K562 (cell line): ENCODE measurements at regions of chr1 and their contacts with region 1.

Region 1: DNA sequence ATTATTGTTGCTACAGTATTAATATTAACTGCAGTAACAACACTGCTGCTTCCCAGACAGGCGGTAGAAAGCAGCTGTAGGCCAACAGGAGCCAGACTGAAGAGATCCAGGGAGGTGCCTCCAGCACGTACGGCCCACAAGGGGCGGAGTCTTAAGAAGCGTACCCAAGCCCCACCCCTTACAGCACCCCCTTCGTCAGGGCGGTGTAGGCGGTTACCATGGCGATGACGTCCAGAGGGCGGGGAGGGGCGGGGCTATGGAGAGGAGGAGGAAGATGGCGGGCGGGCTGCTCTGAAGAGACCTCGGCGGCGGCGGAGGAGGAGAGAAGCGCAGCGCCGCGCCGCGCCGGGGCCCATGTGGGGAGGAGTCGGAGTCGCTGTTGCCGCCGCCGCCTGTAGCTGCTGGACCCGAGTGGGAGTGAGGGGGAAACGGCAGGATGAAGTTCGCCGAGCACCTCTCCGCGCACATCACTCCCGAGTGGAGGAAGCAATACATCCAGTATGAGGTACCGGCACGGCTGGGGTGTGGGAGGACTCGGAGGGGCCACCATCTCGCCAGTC is at the start of gene XPR1:
- DNase-seq: peak; percentile 99 to 100 (median 99)
- ATAC-seq: peak; percentile 97
- H3K4me3 ChIP-seq: peak within 1 kb of the TSS; percentile 89
- H3K27ac ChIP-seq: peak within 1 kb of the TSS; percentile 78
- H3K4me1 ChIP-seq: peaks cover 5 to 16% of the 10 kb centered on the region in 2 experiments; a peak in 4 of 5 replicates
- H3K27me3 ChIP-seq: no peaks in the 10 kb centered on the region
- CTCF ChIP-seq: peak; percentile 30 to 49 (median 47); a peak in 5 of 6 replicates
- EP300 ChIP-seq: no peak
- POLR2A ChIP-seq: peak; percentile 92
- RAD21 ChIP-seq: peak; percentile 23 to 40; a peak in 2 of 4 replicates
- polyA plus RNA-seq, gene XPR1: 3.0 to 4.7 TPM

Region 2: GRCh38 chr1:180515864-180516388 is 115.9 kb before region 1 on chr1:
- CTCF ChIA-PET with region 1: no interaction called
- POLR2A ChIA-PET with region 1: no interaction called
- in situ Hi-C with region 1: no loop called
- intact Hi-C with region 1: loop called (anchors 5 kb)
- DNase-seq: peak; percentile 82 to 95 (median 86)
- ATAC-seq: peak; percentile 98
- H3K4me3 ChIP-seq: no peak overlapping the region
- H3K27ac ChIP-seq: peak overlapping the region; percentile 10; the same call in 1 of the 3 replicates
- H3K4me1 ChIP-seq: peaks cover 3 to 9% of the 10 kb centered on the region in 2 experiments; a peak in 3 of 5 replicates
- H3K27me3 ChIP-seq: no peaks in the 10 kb centered on the region
- CTCF ChIP-seq: peak; percentile 93 to 97 (median 94)
- EP300 ChIP-seq: peak; percentile 32; the same call in 1 of the 2 replicates
- POLR2A ChIP-seq: no peak
- RAD21 ChIP-seq: peak; percentile 98 to 99

Region 3: DNA sequence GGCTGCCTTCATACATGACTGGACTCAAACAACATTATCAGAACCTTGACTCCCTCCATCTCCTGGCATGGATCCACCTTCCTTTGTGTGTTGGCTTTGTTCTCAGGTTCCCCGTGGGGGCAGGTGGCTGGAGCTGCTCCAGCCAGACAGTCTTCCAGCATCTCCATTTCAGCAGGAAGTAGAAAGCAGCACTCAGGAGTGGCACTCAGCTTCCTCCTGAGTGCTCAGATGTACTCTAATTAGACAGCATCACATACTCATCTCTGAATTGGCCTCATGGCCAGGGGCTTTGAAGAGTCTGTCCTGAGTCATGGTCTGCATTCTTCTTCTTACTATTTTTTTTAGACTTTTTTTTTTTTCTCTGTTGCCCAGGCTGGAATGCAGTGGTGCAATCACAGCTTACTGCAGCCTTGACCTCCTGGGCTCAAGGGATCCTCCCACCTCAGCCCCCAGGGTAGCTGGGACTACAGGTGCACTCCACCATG is 45.1 kb before region 1 on chr1:
- CTCF ChIA-PET with region 1: no interaction called
- POLR2A ChIA-PET with region 1: interaction called, 5 read pairs
- in situ Hi-C with region 1: no loop called
- intact Hi-C with region 1: loop called (anchors 1 kb)
- DNase-seq: peak in 2 of 4 experiments; percentile 33 to 73
- ATAC-seq: peak; percentile 6
- H3K4me3 ChIP-seq: no peak overlapping the region
- H3K27ac ChIP-seq: peak overlapping the region; percentile 93
- H3K4me1 ChIP-seq: peaks cover 21 to 29% of the 10 kb centered on the region in 2 experiments
- H3K27me3 ChIP-seq: no peaks in the 10 kb centered on the region
- CTCF ChIP-seq: no peak
- EP300 ChIP-seq: no peak
- POLR2A ChIP-seq: no peak
- RAD21 ChIP-seq: no peak

Region 4: DNA sequence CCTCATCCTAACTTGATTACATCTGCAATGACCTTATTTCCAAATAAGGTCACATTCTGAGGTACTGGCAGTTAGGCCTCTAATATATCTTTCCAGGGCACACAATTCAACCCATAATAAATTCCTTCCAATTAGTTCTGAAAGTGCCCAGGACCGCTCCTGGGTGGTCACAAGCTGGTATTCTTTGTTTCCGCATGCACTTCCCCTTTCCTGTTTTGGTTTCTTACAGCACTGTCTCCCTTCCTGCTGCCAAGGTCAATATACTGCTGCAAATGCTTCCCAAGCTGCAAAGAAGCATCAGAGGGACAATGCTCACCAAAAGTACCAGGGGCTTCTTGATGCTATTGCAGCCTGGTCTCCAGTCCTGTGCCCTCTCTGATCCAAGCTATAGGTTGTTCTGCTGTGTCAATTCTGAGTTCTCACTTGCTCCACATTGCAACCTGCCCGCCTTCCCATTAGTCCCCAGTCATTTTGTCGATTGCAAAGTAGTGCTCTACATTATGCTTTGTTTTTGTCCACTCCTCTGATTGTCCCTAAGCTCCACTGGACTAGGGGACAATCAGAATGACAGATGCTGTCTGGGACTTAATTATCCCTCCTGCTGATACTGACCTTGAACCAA is 14.0 kb before region 1 on chr1:
- CTCF ChIA-PET with region 1: no interaction called
- POLR2A ChIA-PET with region 1: interaction called, 16 read pairs
- in situ Hi-C with region 1: no loop called
- intact Hi-C with region 1: no loop called
- DNase-seq: no peak
- ATAC-seq: no peak
- H3K4me3 ChIP-seq: no peak overlapping the region
- H3K27ac ChIP-seq: no peak overlapping the region
- H3K4me1 ChIP-seq: peaks cover 0 to 43% of the 10 kb centered on the region in 2 experiments; a peak in 4 of 5 replicates
- H3K27me3 ChIP-seq: no peaks in the 10 kb centered on the region
- CTCF ChIP-seq: no peak
- EP300 ChIP-seq: no peak
- POLR2A ChIP-seq: no peak
- RAD21 ChIP-seq: no peak

Region 5: DNA sequence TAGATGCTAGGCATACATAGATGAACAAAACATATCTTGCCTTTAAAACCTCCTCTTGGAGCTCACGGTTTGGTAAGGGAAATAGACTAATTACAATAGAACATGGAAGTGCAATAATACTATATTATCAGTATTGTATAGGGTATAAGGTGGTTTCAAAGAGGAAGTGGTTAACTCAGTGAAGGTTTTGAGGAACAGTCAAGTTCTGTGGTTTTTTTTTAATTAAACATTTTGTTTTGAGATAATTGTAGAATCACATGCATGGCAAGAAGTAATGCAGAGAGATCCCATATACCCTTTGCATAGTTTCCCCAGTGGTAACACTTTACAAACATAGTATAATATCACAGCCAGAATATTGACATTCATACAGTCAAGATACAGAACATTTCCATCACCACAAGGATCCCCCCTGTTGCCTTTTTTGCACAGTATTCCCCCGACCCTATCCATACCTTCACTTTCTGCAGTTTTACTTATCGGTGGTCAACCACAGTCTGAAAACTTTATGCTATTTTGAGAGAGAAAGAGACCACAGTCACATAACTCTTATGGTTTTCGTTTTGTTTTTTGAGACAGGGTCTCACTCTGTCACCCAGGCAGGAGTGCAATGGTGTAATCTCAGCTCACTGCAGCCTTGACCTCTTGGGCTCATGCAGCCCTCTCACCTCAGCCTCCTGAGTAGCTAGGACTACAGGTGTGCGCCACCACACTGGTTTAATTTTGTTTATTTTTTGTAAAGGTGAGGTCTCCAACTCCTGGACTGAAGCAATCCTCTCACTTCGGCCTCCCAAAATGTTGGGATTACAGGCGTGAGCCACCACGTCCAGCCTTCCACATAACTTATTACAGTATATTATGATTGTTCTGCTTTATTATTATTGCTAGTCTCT is 220.4 kb after region 1 on chr1:
- CTCF ChIA-PET with region 1: interaction called, 7 read pairs
- POLR2A ChIA-PET with region 1: no interaction called
- in situ Hi-C with region 1: loop called (anchors 5 kb)
- intact Hi-C with region 1: no loop called
- DNase-seq: no peak
- ATAC-seq: no peak
- H3K4me3 ChIP-seq: no peak overlapping the region
- H3K27ac ChIP-seq: no peak overlapping the region
- H3K4me1 ChIP-seq: peaks cover 0 to 15% of the 10 kb centered on the region in 2 experiments; a peak in 3 of 5 replicates
- H3K27me3 ChIP-seq: no peaks in the 10 kb centered on the region
- CTCF ChIP-seq: no peak
- EP300 ChIP-seq: no peak
- POLR2A ChIP-seq: no peak
- RAD21 ChIP-seq: no peak

Region 6: GRCh38 chr1:181152892-181153633 is 521.2 kb after region 1 on chr1:
- CTCF ChIA-PET with region 1: no interaction called
- POLR2A ChIA-PET with region 1: no interaction called
- in situ Hi-C with region 1: loop called (anchors 25 kb)
- intact Hi-C with region 1: loop called (anchors 10 kb)
- DNase-seq: peak; percentile 90 to 99 (median 94)
- ATAC-seq: peak; percentile 98
- H3K4me3 ChIP-seq: no peak overlapping the region
- H3K27ac ChIP-seq: peak overlapping the region; percentile 65
- H3K4me1 ChIP-seq: peaks cover 27 to 31% of the 10 kb centered on the region in 2 experiments
- H3K27me3 ChIP-seq: no peaks in the 10 kb centered on the region
- CTCF ChIP-seq: peak; percentile 71 to 86 (median 80)
- EP300 ChIP-seq: peak; percentile 99
- POLR2A ChIP-seq: no peak
- RAD21 ChIP-seq: peak; percentile 78 to 79